ENCODE measurements at regions of chr19 and their contacts with region 1.

Region 1: DNA sequence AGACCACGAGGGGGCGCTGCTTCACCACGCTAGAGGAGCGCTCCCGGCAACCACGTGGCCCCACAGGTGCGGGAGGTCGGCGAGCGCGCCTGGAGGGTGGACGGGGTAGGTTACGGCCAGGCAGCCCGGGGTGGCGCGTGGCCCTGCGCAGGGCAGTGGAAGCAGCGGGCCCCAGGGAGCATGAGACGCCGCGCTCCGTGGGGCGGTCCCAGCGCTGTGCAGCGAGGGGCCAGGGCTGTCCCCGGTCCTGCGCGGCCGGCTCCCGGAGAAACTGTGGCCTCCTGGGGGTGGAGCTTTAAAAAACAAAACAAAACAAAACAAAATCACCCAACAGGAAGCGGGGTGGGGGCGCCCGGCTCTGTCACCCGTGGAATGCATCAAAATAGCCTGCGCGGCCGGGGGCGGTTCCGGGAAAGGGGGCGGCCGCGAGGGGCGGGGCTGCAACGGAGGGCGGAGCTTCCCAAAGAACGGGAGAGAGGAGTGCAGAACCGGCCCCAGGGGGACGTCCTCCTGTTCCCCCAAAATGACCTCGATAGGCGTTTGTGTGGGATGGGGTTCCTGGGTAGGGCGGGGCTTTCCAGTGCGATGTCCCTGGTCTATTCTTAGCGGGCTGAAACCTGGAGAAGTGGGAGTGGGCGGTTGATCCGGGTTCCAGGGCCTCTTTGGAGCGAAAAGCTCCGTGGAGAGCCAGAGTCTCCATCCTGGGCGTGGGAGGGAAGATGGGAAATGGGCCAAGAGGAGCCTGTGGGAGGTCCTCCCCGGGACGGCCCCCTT is 27.3 kb downstream of the NUMBL start:
- DNase-seq: peak; percentile 81 to 96 (median 92)
- ATAC-seq: peak; percentile 96
- H3K4me3 ChIP-seq: peak overlapping the region; percentile 75
- H3K4me3 Mint-ChIP-seq: peak overlapping the region; percentile 76 to 91 (median 84)
- H3K27ac ChIP-seq: peak overlapping the region; percentile 75
- H3K27ac Mint-ChIP-seq: peak overlapping the region; percentile 67 to 91 (median 84)
- H3K4me1 ChIP-seq: peaks cover 0 to 7% of the 10 kb centered on the region in 2 donors
- H3K4me1 Mint-ChIP-seq: peaks cover 0 to 27% (median 6%) of the 10 kb centered on the region in 7 donors
- H3K27me3 ChIP-seq: no peaks in the 10 kb centered on the region
- H3K27me3 Mint-ChIP-seq: peaks cover 0 to 4% (median 0%) of the 10 kb centered on the region in 5 donors

Region 2: DNA sequence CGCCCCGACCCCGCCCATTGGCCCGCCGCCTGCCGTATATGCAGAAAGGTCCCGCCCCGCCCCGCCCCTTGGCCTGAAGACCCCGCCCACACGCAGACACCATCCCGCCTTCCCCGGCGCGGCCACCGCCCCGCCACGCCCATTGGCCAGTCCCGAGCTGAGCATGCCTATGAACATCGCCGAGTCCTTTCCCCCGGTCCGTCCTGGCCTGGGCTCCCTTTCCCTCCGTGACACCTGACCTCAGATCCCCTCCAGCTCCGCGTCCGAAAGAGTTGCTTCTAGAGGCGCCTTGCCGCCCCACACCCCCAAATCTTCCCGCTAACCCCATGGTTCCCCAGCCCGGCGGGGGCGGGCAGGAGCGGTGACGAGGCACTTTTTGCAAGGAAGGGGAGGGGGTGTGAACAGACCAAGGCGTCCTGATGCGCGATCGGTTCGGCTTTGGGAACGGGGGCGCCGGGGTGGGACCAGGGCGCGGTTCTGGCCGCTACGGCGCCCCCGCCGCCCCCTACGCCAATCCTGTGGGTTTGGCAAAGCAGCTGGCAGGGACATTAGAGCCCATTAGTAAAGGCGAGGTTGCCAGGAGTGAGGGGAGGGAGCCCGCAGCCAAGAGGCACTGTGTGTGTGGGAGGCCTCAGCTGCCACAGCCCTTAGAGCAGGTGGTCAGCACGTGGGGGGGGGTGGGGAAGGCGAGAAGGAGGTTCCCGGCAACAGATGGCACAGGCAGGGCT is 27.7 kb after region 1 on chr19:
- CTCF ChIA-PET with region 1: interaction called, 3 read pairs
- POLR2A ChIA-PET with region 1: no interaction called
- intact Hi-C with region 1: loop called (anchors 1 kb)
- DNase-seq: peak; percentile 60 to 90 (median 75)
- ATAC-seq: peak; percentile 92
- H3K4me3 ChIP-seq: peak overlapping the region; percentile 68
- H3K4me3 Mint-ChIP-seq: peak overlapping the region in 9 of 10 donors; percentile 78 to 96 (median 91)
- H3K27ac ChIP-seq: peak overlapping the region; percentile 55
- H3K27ac Mint-ChIP-seq: peak overlapping the region in 8 of 9 donors; percentile 58 to 94 (median 74)
- H3K4me1 ChIP-seq: peaks cover 0 to 6% of the 10 kb centered on the region in 2 donors
- H3K4me1 Mint-ChIP-seq: peaks cover 0 to 6% (median 4%) of the 10 kb centered on the region in 7 donors
- H3K27me3 ChIP-seq: no peaks in the 10 kb centered on the region
- H3K27me3 Mint-ChIP-seq: no peaks in the 10 kb centered on the region

Region 3: GRCh38 chr19:40724855-40725254 is 61.7 kb after region 1 on chr19:
- CTCF ChIA-PET with region 1: no interaction called
- POLR2A ChIA-PET with region 1: no interaction called
- intact Hi-C with region 1: no loop called
- DNase-seq: no peak
- ATAC-seq: no peak
- H3K4me3 ChIP-seq: no peak overlapping the region
- H3K4me3 Mint-ChIP-seq: no peak overlapping the region
- H3K27ac ChIP-seq: no peak overlapping the region
- H3K27ac Mint-ChIP-seq: no peak overlapping the region
- H3K4me1 ChIP-seq: peaks cover 0 to 8% of the 10 kb centered on the region in 2 donors
- H3K4me1 Mint-ChIP-seq: peaks cover 15 to 42% (median 29%) of the 10 kb centered on the region in 7 donors
- H3K27me3 ChIP-seq: no peaks in the 10 kb centered on the region
- H3K27me3 Mint-ChIP-seq: no peaks in the 10 kb centered on the region

Region 4: DNA sequence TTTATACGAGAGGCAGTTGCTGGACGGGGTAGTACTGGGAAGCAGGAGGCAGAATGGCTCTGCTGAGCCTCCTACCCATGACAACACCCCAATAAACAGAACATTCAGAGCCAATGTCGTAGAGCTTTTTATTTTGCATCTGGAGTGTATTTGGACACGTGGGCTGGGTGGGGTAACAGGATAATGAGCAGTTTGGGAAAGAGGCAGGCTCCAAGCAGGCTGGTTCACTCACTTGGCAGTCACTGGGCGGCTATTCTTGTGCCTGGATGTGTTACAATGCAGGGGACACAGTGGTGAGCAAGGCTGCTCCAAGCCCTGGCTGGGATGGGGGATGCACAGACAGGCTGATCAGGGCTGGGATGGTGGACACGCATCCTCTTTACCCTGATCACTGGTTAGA is 77.6 kb after region 1 on chr19:
- CTCF ChIA-PET with region 1: no interaction called
- POLR2A ChIA-PET with region 1: no interaction called
- intact Hi-C with region 1: no loop called
- DNase-seq: no peak
- ATAC-seq: no peak
- H3K4me3 ChIP-seq: no peak overlapping the region
- H3K4me3 Mint-ChIP-seq: no peak overlapping the region
- H3K27ac ChIP-seq: no peak overlapping the region
- H3K27ac Mint-ChIP-seq: peak overlapping the region in 1 of 9 donors; percentile 68
- H3K4me1 ChIP-seq: no peaks in the 10 kb centered on the region
- H3K4me1 Mint-ChIP-seq: peaks cover 0 to 3% (median 0%) of the 10 kb centered on the region in 7 donors
- H3K27me3 ChIP-seq: no peaks in the 10 kb centered on the region
- H3K27me3 Mint-ChIP-seq: no peaks in the 10 kb centered on the region

Region 5: DNA sequence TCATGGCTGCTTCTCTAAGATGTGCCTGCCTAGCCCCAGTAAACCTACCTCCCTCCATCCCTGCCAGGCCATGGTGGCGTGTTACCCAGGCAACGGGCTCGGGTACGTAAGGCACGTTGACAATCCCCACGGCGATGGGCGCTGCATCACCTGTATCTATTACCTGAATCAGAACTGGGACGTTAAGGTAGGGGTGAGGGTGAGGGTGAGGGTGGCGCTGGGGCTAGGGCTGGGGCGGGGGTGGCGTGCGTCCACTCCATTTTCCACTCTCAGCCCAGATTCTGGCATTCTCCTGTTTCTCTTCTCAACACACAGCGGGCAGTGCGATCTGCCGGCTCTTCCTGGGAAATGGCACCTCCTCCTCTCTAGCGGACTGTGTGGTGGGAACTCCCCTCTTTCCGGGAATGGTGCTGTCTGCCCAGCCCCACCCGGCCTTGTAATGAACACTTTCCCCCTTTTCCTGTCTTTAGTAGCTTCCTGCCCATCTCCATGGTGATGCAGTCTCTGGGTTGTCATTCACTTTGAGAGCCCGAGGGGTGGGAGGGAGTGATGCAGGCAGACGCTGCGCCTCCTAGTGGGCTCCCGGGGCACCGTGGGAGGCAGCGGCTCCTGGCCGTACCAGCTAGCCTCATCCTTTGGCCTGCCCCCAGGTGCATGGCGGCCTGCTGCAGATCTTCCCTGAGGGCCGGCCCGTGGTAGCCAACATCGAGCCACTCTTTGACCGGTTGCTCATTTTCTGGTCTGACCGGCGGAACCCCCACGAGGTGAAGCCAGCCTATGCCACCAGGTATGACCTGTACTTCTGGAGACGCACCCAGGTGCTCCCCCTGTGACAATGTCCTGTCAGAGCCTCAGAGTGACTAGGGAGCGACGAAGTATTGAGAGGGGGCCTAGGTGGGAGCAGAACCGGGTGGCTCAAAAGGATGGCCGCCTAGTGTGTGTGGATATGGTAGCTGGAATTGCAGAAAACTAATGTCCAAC is 143.7 kb after region 1 on chr19:
- CTCF ChIA-PET with region 1: interaction called, 12 read pairs
- POLR2A ChIA-PET with region 1: interaction called, 3 read pairs
- intact Hi-C with region 1: loop called in 1 of 2 experiments (anchors 1 kb)
- DNase-seq: peak; percentile 65 to 88 (median 81)
- ATAC-seq: peak; percentile 71
- H3K4me3 ChIP-seq: peak overlapping the region; percentile 53
- H3K4me3 Mint-ChIP-seq: peak overlapping the region; percentile 81 to 100 (median 90)
- H3K27ac ChIP-seq: peak overlapping the region; percentile 87
- H3K27ac Mint-ChIP-seq: peak overlapping the region; percentile 95 to 99 (median 98)
- H3K4me1 ChIP-seq: peaks cover 66 to 80% of the 10 kb centered on the region in 2 donors
- H3K4me1 Mint-ChIP-seq: peaks cover 67 to 98% (median 85%) of the 10 kb centered on the region in 7 donors
- H3K27me3 ChIP-seq: no peaks in the 10 kb centered on the region
- H3K27me3 Mint-ChIP-seq: peaks cover 0 to 6% (median 0%) of the 10 kb centered on the region in 5 donors

Region 6: GRCh38 chr19:40822161-40822560 is 159.1 kb after region 1 on chr19:
- CTCF ChIA-PET with region 1: interaction called, 28 read pairs
- POLR2A ChIA-PET with region 1: interaction called, 12 read pairs
- intact Hi-C with region 1: loop called (anchors 1 kb)
- DNase-seq: no peak
- ATAC-seq: no peak
- H3K4me3 ChIP-seq: no peak overlapping the region
- H3K4me3 Mint-ChIP-seq: no peak overlapping the region
- H3K27ac ChIP-seq: no peak overlapping the region
- H3K27ac Mint-ChIP-seq: peak overlapping the region in 3 of 9 donors; percentile 51 to 78 (median 62)
- H3K4me1 ChIP-seq: peaks cover 16 to 27% of the 10 kb centered on the region in 2 donors
- H3K4me1 Mint-ChIP-seq: peaks cover 36 to 58% (median 44%) of the 10 kb centered on the region in 7 donors
- H3K27me3 ChIP-seq: no peaks in the 10 kb centered on the region
- H3K27me3 Mint-ChIP-seq: no peaks in the 10 kb centered on the region

Region 7: GRCh38 chr19:41123716-41124294 is 460.7 kb after region 1 on chr19:
- CTCF ChIA-PET with region 1: no interaction called
- POLR2A ChIA-PET with region 1: no interaction called
- intact Hi-C with region 1: loop called in 1 of 2 experiments (anchors 5 kb)
- DNase-seq: no peak
- ATAC-seq: no peak
- H3K4me3 ChIP-seq: no peak overlapping the region
- H3K4me3 Mint-ChIP-seq: no peak overlapping the region
- H3K27ac ChIP-seq: no peak overlapping the region
- H3K27ac Mint-ChIP-seq: peak overlapping the region; percentile 9 to 95 (median 88)
- H3K4me1 ChIP-seq: peaks cover 26 to 31% of the 10 kb centered on the region in 2 donors
- H3K4me1 Mint-ChIP-seq: peaks cover 21 to 49% (median 44%) of the 10 kb centered on the region in 7 donors
- H3K27me3 ChIP-seq: no peaks in the 10 kb centered on the region
- H3K27me3 Mint-ChIP-seq: peaks cover 0 to 14% (median 0%) of the 10 kb centered on the region in 5 donors

Region 8: GRCh38 chr19:41206926-41207750 is 544.0 kb after region 1 on chr19:
- CTCF ChIA-PET with region 1: no interaction called
- POLR2A ChIA-PET with region 1: no interaction called
- intact Hi-C with region 1: loop called in 1 of 2 experiments (anchors 1 kb)
- DNase-seq: no peak
- ATAC-seq: no peak
- H3K4me3 ChIP-seq: no peak overlapping the region
- H3K4me3 Mint-ChIP-seq: no peak overlapping the region
- H3K27ac ChIP-seq: no peak overlapping the region
- H3K27ac Mint-ChIP-seq: peak overlapping the region in 6 of 9 donors; percentile 15 to 85 (median 54)
- H3K4me1 ChIP-seq: no peaks in the 10 kb centered on the region
- H3K4me1 Mint-ChIP-seq: peaks cover 3 to 12% (median 7%) of the 10 kb centered on the region in 7 donors
- H3K27me3 ChIP-seq: no peaks in the 10 kb centered on the region
- H3K27me3 Mint-ChIP-seq: no peaks in the 10 kb centered on the region

Region 9: GRCh38 chr19:42003506-42004294 is 1340.6 kb after region 1 on chr19:
- CTCF ChIA-PET with region 1: no interaction called
- POLR2A ChIA-PET with region 1: no interaction called
- intact Hi-C with region 1: no loop called
- DNase-seq: no peak
- ATAC-seq: no peak
- H3K4me3 ChIP-seq: no peak overlapping the region
- H3K4me3 Mint-ChIP-seq: no peak overlapping the region
- H3K27ac ChIP-seq: no peak overlapping the region
- H3K27ac Mint-ChIP-seq: no peak overlapping the region
- H3K4me1 ChIP-seq: no peaks in the 10 kb centered on the region
- H3K4me1 Mint-ChIP-seq: peaks cover 5 to 11% (median 6%) of the 10 kb centered on the region in 7 donors
- H3K27me3 ChIP-seq: no peaks in the 10 kb centered on the region
- H3K27me3 Mint-ChIP-seq: peaks cover 30 to 38% (median 34%) of the 10 kb centered on the region in 5 donors